ENCODE measurements at regions of chr1 and their contacts with region 1.

Region 1: DNA sequence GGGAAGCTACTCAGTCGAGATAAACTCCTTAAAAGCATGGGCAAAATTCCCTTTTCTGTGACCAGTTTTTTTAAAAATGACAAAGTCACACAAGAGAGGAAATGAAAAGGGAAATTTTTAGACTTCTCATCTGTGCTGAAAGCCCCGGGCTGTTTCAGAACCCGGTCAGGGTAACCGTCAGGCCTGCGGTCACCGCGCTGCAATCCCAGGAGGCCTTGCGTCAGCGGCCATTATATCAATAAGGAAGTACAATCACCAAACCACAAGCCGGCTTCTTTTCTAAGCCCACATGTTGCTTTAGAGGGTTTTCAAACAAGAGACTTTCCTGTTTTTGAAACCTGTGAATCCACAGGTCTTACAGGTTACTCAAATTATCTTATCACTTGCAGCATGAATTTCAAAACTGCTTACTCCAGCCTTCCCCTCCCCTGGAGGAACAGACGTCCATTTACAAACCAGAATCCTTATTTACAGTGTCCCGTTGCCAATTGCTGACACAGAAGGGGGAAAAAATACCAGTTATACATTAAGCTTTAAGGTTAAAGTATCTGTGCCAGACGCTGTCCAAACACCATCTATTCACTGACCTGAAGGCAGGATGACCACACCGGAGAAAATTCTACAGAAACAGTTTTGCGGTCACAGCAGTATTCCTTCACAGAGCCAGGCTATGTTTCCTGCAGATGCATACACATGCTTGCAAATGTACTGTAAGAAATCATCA is 165.3 kb downstream of the TOMM20 start:
- DNase-seq: peak; percentile 89
- H3K4me3 Mint-ChIP-seq: peak overlapping the region; percentile 15
- H3K27ac Mint-ChIP-seq: peak overlapping the region; percentile 86
- H3K4me1 Mint-ChIP-seq: peaks cover 73% of the 10 kb centered on the region
- H3K27me3 Mint-ChIP-seq: no peaks in the 10 kb centered on the region
- CTCF ChIP-seq: no peak

Region 2: GRCh38 chr1:234499119-234499942 is 464.0 kb before region 1 on chr1:
- CTCF ChIA-PET with region 1: interaction called, 8 read pairs
- intact Hi-C with region 1: loop called (anchors 1 kb)
- DNase-seq: peak; percentile 95
- H3K4me3 Mint-ChIP-seq: peak overlapping the region; percentile 51
- H3K27ac Mint-ChIP-seq: peak overlapping the region; percentile 97
- H3K4me1 Mint-ChIP-seq: peaks cover 87% of the 10 kb centered on the region
- H3K27me3 Mint-ChIP-seq: no peaks in the 10 kb centered on the region
- CTCF ChIP-seq: peak; percentile 93

Region 3: DNA sequence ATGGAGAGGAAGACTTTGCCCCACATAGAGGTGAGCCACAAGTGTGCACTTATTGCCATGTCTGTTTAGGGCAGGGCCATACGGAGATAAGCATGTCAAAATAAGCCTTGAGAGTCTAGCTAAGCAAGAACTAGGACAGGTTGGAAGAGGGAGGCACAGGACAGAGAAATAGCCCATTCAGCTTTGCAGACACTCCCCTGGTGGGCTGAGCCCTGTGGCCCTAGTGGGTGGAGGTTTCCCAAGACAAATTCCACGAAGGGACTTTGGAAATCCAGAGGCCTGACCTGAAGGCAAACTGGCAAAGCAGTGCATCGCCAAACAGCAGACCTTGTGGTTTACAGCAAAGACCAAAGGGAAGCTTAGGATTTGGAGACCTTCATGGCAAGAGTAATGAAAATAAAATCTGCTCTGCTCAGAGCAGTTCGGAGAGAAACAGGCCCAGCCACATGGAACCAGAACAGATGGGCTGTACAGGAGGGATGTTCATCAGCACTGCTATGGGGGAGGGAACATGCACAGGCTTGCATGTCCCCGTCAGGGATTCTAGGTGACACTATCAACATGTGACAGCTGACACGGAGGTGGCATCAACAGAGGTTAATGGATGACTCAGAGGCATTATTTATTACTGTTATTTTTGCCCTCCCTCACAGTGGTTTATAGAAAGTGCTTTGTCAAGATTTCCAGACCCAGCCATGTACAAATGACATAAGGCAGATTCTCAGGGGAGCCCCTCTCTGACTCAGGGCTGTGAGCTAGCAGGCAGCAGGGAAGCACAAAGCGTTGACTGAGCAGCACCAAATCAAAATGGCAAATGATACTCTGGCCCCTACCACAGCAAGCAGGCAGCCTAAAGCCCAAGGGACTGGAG is 263.3 kb before region 1 on chr1:
- CTCF ChIA-PET with region 1: no interaction called
- intact Hi-C with region 1: no loop called
- DNase-seq: no peak
- H3K4me3 Mint-ChIP-seq: no peak overlapping the region
- H3K27ac Mint-ChIP-seq: no peak overlapping the region
- H3K4me1 Mint-ChIP-seq: peaks cover 34% of the 10 kb centered on the region
- H3K27me3 Mint-ChIP-seq: no peaks in the 10 kb centered on the region
- CTCF ChIP-seq: no peak

Region 4: DNA sequence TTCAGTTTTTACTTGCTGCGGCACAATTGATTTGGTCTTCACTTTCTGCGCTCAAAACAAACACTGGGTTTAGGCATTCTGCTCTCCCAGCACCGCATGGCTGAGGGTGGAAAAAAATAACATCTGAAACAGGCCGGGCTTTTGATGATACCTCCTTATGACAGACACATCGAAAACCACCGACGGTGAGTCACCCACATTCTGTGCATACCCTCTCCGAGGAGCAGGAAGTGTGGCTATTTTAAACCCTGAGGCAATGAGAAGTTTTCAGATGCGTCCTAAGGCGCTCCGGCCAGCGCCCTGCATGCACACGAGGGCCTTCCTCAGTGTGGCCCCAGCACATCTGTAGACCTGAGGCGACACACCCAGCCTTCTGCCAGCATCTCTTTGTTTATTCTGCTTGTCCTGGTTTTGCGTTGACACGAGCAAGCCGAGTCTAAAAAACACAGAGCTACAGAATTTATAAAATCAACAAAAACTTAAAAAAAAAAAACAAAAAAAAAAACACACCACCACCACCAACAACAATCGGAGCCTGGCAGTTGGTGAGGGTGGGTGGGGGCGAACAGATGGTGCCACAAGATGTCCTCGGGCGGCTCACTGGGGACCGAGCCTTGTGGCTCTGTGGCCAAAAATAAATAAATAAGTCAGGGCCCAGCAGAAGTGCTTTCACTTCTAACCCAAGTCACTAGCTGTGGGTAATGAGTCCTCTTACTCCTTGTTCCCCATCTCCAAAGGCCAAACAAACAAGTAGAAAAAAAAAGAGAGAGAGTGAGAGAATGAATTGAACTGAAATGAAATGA is 190.8 kb before region 1 on chr1:
- CTCF ChIA-PET with region 1: no interaction called
- intact Hi-C with region 1: loop called (anchors 2 kb)
- DNase-seq: peak; percentile 93
- H3K4me3 Mint-ChIP-seq: peak overlapping the region; percentile 34
- H3K27ac Mint-ChIP-seq: peak overlapping the region; percentile 93
- H3K4me1 Mint-ChIP-seq: peaks cover 32% of the 10 kb centered on the region
- H3K27me3 Mint-ChIP-seq: no peaks in the 10 kb centered on the region
- CTCF ChIP-seq: no peak

Region 5: DNA sequence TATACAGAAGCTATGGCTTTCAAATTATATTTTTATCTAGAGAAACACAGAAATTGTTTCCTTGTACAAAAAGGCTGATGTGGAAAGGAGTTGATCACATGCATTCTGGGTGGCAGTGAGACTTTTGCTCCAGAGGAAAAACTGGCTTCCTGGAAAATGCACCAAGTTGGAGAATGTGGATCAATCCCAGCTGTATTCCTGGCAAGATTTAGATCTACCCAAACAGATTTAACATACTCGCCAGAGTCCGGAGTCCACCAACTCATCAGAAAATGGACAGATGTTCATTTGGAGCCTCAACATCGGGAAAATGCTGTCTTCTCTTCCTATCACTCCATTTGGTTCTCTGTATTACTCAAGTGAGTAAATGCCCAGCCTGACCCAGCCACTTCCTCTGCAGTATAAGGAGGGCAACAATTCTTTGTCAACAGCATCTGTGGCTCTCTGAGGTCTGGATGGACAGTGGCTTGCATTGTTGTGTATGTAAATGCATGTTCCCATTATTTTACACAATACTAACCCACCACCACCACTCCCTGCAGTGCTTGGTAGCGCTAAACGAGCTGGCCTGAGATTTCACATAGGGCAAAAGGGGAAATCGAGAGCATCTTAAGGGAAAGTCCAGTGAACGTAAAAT is 127.2 kb before region 1 on chr1:
- CTCF ChIA-PET with region 1: no interaction called
- intact Hi-C with region 1: no loop called
- DNase-seq: no peak
- H3K4me3 Mint-ChIP-seq: no peak overlapping the region
- H3K27ac Mint-ChIP-seq: no peak overlapping the region
- H3K4me1 Mint-ChIP-seq: peaks cover 14% of the 10 kb centered on the region
- H3K27me3 Mint-ChIP-seq: no peaks in the 10 kb centered on the region
- CTCF ChIP-seq: no peak

Region 6: GRCh38 chr1:234925440-234926263 is 37.7 kb before region 1 on chr1:
- CTCF ChIA-PET with region 1: interaction called, 7 read pairs
- intact Hi-C with region 1: loop called (anchors 1 kb)
- DNase-seq: peak; percentile 71
- H3K4me3 Mint-ChIP-seq: no peak overlapping the region
- H3K27ac Mint-ChIP-seq: peak overlapping the region; percentile 28
- H3K4me1 Mint-ChIP-seq: peaks cover 30% of the 10 kb centered on the region
- H3K27me3 Mint-ChIP-seq: no peaks in the 10 kb centered on the region
- CTCF ChIP-seq: no peak

Region 7: GRCh38 chr1:234997201-234997895 is 34.0 kb after region 1 on chr1:
- CTCF ChIA-PET with region 1: interaction called, 8 read pairs
- intact Hi-C with region 1: loop called (anchors 2 kb)
- DNase-seq: peak; percentile 99
- H3K4me3 Mint-ChIP-seq: peak overlapping the region; percentile 22
- H3K27ac Mint-ChIP-seq: peak overlapping the region; percentile 91
- H3K4me1 Mint-ChIP-seq: peaks cover 28% of the 10 kb centered on the region
- H3K27me3 Mint-ChIP-seq: no peaks in the 10 kb centered on the region
- CTCF ChIP-seq: no peak

Region 8: GRCh38 chr1:235075188-235075926 is 112.0 kb after region 1 on chr1:
- CTCF ChIA-PET with region 1: interaction called, 9 read pairs
- intact Hi-C with region 1: loop called (anchors 1 kb)
- DNase-seq: peak; percentile 73
- H3K4me3 Mint-ChIP-seq: peak overlapping the region; percentile 50
- H3K27ac Mint-ChIP-seq: peak overlapping the region; percentile 98
- H3K4me1 Mint-ChIP-seq: peaks cover 35% of the 10 kb centered on the region
- H3K27me3 Mint-ChIP-seq: no peaks in the 10 kb centered on the region
- CTCF ChIP-seq: no peak

Region 9: DNA sequence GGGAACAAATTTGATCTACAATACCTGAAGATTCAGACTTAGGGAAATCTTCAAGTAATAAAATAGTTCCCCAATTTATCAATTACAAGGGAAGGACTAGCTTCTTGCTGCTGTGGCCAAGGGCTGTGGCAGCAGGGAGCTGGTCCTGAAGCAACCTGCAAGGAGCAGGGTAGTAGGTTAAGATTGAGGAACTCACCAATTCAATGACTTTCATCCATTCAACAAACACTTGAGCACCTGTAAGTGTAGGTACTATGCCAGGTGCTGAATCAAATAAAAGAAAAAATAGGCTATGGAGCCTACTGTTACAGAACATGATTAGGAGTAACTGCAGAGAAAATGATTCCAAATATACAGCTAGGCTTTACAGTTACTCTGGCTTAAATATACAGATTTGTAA is 262.0 kb after region 1 on chr1:
- CTCF ChIA-PET with region 1: no interaction called
- intact Hi-C with region 1: no loop called
- DNase-seq: no peak
- H3K4me3 Mint-ChIP-seq: no peak overlapping the region
- H3K27ac Mint-ChIP-seq: no peak overlapping the region
- H3K4me1 Mint-ChIP-seq: peaks cover 8% of the 10 kb centered on the region
- H3K27me3 Mint-ChIP-seq: no peaks in the 10 kb centered on the region
- CTCF ChIP-seq: no peak

Measured in Calu3 (cell line).